H1 (cell line): ENCODE measurements at regions of chr17 and their contacts with region 1.

Region 1: GRCh38 chr17:10772425-10773380 is 31.2 kb downstream of the TMEM238L start:
- DNase-seq: peak; percentile 53 to 97
- H3K4me3 ChIP-seq: no peak overlapping the region
- H3K27ac ChIP-seq: no peak overlapping the region
- H3K4me1 ChIP-seq: no peaks in the 10 kb centered on the region; a peak in 1 of 7 replicates
- H3K27me3 ChIP-seq: no peaks in the 10 kb centered on the region
- CTCF ChIP-seq: peak; percentile 64 to 95 (median 84)
- EP300 ChIP-seq: no peak
- POLR2A ChIP-seq: no peak
- RAD21 ChIP-seq: peak; percentile 88 to 91

Region 2: DNA sequence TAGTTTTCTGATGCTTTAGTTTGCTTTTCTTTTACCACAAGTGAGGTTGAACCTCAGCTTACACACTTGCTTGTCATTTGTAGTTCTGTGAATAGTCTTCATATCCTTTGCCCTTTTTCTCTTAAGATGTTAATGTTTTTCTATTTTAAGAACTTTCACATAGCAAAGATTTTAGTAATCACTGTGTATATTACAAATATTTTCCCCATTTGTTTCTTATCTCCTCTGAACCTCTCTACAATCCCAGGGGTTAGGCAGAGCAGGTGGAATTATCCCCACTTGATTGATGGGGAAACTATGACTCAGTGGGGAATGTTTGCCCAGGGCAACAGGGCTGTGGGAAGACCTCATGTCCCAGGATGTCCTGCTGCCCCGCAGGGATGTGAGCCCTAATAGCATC is 103.9 kb before region 1 on chr17:
- CTCF ChIA-PET with region 1: no interaction called
- POLR2A ChIA-PET with region 1: no interaction called
- DNase-seq: no peak
- H3K4me3 ChIP-seq: no peak overlapping the region
- H3K27ac ChIP-seq: no peak overlapping the region
- H3K4me1 ChIP-seq: no peaks in the 10 kb centered on the region
- H3K27me3 ChIP-seq: no peaks in the 10 kb centered on the region
- CTCF ChIP-seq: no peak
- EP300 ChIP-seq: no peak
- POLR2A ChIP-seq: no peak
- RAD21 ChIP-seq: no peak

Region 3: DNA sequence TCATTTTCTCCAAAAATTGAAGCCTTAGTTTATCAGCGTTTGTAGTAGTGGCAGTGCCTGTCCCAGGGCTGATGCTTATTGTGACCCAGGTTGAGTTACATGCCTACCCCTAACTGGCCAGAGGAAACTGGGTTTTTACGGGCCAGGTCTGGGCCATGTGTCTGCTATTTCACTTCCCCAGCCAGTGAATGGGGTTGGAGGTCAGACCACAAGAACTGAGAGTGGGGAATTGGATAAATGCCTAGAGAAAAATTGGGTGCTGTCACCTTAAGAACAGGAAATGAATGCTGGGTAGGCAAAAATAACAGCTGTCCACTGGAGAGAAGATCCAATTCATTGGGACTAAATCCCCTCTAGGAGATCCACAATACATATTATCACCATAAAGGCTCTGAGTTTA is 70.1 kb before region 1 on chr17:
- CTCF ChIA-PET with region 1: no interaction called
- POLR2A ChIA-PET with region 1: no interaction called
- DNase-seq: no peak
- H3K4me3 ChIP-seq: no peak overlapping the region
- H3K27ac ChIP-seq: no peak overlapping the region
- H3K4me1 ChIP-seq: no peaks in the 10 kb centered on the region
- H3K27me3 ChIP-seq: no peaks in the 10 kb centered on the region
- CTCF ChIP-seq: no peak
- EP300 ChIP-seq: no peak
- POLR2A ChIP-seq: no peak
- RAD21 ChIP-seq: no peak

Region 4: GRCh38 chr17:10754109-10754508 is 18.6 kb before region 1 on chr17:
- CTCF ChIA-PET with region 1: interaction called, 20 read pairs
- POLR2A ChIA-PET with region 1: interaction called, 4 read pairs
- DNase-seq: peak in 1 of 2 experiments; percentile 78
- H3K4me3 ChIP-seq: peak overlapping the region in 1 of 4 experiments; percentile 57; a peak in 2 of 8 replicates
- H3K27ac ChIP-seq: no peak overlapping the region
- H3K4me1 ChIP-seq: peaks cover 9 to 20% (median 14%) of the 10 kb centered on the region in 4 experiments
- H3K27me3 ChIP-seq: no peaks in the 10 kb centered on the region
- CTCF ChIP-seq: peak; percentile 68 to 90 (median 77)
- EP300 ChIP-seq: no peak
- POLR2A ChIP-seq: no peak
- RAD21 ChIP-seq: peak; percentile 59 to 69

Region 5: GRCh38 chr17:10790491-10791401 is 18.0 kb after region 1 on chr17:
- CTCF ChIA-PET with region 1: interaction called, 22 read pairs
- POLR2A ChIA-PET with region 1: interaction called, 10 read pairs
- DNase-seq: no peak
- H3K4me3 ChIP-seq: no peak overlapping the region
- H3K27ac ChIP-seq: no peak overlapping the region
- H3K4me1 ChIP-seq: peaks cover 4 to 13% (median 5%) of the 10 kb centered on the region in 4 experiments; a peak in 4 of 7 replicates
- H3K27me3 ChIP-seq: no peaks in the 10 kb centered on the region; a peak in 1 of 7 replicates
- CTCF ChIP-seq: no peak
- EP300 ChIP-seq: no peak
- POLR2A ChIP-seq: peak; percentile 63 to 90
- RAD21 ChIP-seq: no peak

Region 6: DNA sequence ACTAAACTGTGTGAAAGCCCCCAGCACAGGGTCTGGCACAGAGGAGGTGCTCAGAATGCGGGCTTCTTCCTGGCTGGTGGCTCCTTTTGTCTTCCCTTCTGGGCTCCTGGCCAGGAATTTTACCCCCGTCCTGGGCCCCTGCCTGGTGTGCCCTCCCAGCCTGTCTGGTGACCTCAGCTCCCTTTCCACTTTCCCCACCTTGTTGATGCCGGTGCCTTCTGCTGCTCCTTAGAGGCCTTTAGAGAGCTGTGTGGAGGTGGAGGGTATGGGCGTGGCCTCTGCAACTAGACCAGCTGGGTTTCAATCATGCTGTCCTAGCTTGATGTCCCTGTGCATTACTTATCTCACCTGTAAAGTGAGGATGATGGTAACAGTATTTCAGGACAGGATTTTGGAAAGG is 48.4 kb after region 1 on chr17:
- CTCF ChIA-PET with region 1: interaction called, 12 read pairs
- POLR2A ChIA-PET with region 1: no interaction called
- DNase-seq: no peak
- H3K4me3 ChIP-seq: no peak overlapping the region
- H3K27ac ChIP-seq: no peak overlapping the region
- H3K4me1 ChIP-seq: no peaks in the 10 kb centered on the region
- H3K27me3 ChIP-seq: no peaks in the 10 kb centered on the region
- CTCF ChIP-seq: no peak
- EP300 ChIP-seq: no peak
- POLR2A ChIP-seq: no peak
- RAD21 ChIP-seq: no peak

Region 7: GRCh38 chr17:10844621-10845387 is 72.1 kb after region 1 on chr17:
- CTCF ChIA-PET with region 1: interaction called, 57 read pairs
- POLR2A ChIA-PET with region 1: no interaction called
- DNase-seq: peak; percentile 46 to 81
- H3K4me3 ChIP-seq: peak overlapping the region; percentile 32 to 69 (median 57)
- H3K27ac ChIP-seq: no peak overlapping the region
- H3K4me1 ChIP-seq: peaks cover 7 to 10% (median 7%) of the 10 kb centered on the region in 4 experiments; a peak in 6 of 7 replicates
- H3K27me3 ChIP-seq: peaks cover 0 to 2% (median 0%) of the 10 kb centered on the region in 4 experiments; a peak in 1 of 7 replicates
- CTCF ChIP-seq: peak; percentile 89 to 95 (median 91)
- EP300 ChIP-seq: no peak
- POLR2A ChIP-seq: no peak
- RAD21 ChIP-seq: peak; percentile 91 to 92